B cell (primary cell): ENCODE measurements at regions of chr1 and their contacts with region 1.

Region 1: GRCh38 chr1:206563367-206564207 is 48.7 kb downstream of the EIF2D start:
- DNase-seq: no peak
- ATAC-seq: no peak
- H3K4me3 ChIP-seq: peak overlapping the region in 3 of 5 experiments; percentile 6 to 15 (median 11)
- H3K4me3 Mint-ChIP-seq: peak overlapping the region; percentile 78
- H3K27ac ChIP-seq: peak overlapping the region; percentile 60 to 77
- H3K27ac Mint-ChIP-seq: peak overlapping the region; percentile 92
- H3K4me1 ChIP-seq: peaks cover 86 to 98% of the 10 kb centered on the region in 2 donors
- H3K4me1 Mint-ChIP-seq: peaks cover 94% of the 10 kb centered on the region
- H3K27me3 ChIP-seq: no peaks in the 10 kb centered on the region
- H3K27me3 Mint-ChIP-seq: no peaks in the 10 kb centered on the region
- CTCF ChIP-seq: no peak

Region 2: DNA sequence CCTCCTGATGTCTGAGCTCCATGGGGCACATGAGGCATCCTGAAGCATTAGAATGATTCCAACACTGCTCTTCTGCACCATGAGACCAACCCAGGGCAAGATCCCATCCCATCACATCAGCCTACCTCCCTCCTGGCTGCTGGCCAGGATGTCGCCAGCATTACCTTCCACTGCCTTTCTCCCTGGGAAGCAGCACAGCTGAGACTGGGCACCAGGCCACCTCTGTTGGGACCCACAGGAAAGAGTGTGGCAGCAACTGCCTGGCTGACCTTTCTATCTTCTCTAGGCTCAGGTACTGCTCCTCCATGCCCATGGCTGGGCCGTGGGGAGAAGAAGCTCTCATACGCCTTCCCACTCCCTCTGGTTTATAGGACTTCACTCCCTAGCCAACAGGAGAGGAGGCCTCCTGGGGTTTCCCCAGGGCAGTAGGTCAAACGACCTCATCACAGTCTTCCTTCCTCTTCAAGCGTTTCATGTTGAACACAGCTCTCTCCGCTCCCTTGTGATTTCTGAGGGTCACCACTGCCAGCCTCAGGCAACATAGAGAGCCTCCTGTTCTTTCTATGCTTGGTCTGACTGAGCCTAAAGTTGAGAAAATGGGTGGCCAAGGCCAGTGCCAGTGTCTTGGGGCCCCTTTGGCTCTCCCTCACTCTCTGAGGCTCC is 67.3 kb before region 1 on chr1:
- CTCF ChIA-PET with region 1: no interaction called
- POLR2A ChIA-PET with region 1: no interaction called
- intact Hi-C with region 1: loop called (anchors 5 kb)
- DNase-seq: peak; percentile 46
- ATAC-seq: peak; percentile 44
- H3K4me3 ChIP-seq: peak overlapping the region in 1 of 5 experiments; percentile 3
- H3K4me3 Mint-ChIP-seq: peak overlapping the region; percentile 68
- H3K27ac ChIP-seq: peak overlapping the region; percentile 28 to 67
- H3K27ac Mint-ChIP-seq: peak overlapping the region; percentile 83
- H3K4me1 ChIP-seq: peaks cover 32 to 37% of the 10 kb centered on the region in 2 donors
- H3K4me1 Mint-ChIP-seq: peaks cover 43% of the 10 kb centered on the region
- H3K27me3 ChIP-seq: no peaks in the 10 kb centered on the region
- H3K27me3 Mint-ChIP-seq: no peaks in the 10 kb centered on the region
- CTCF ChIP-seq: no peak

Region 3: GRCh38 chr1:206575165-206575893 is 11.7 kb after region 1 on chr1:
- CTCF ChIA-PET with region 1: interaction called, 1,018 read pairs
- POLR2A ChIA-PET with region 1: interaction called, 16 read pairs
- intact Hi-C with region 1: loop called (anchors 1 kb)
- DNase-seq: peak; percentile 84
- ATAC-seq: peak; percentile 38
- H3K4me3 ChIP-seq: peak overlapping the region; percentile 2 to 49 (median 26)
- H3K4me3 Mint-ChIP-seq: peak overlapping the region; percentile 86
- H3K27ac ChIP-seq: peak overlapping the region; percentile 86 to 96
- H3K27ac Mint-ChIP-seq: peak overlapping the region; percentile 98
- H3K4me1 ChIP-seq: peaks cover 80 to 89% of the 10 kb centered on the region in 2 donors
- H3K4me1 Mint-ChIP-seq: peaks cover 92% of the 10 kb centered on the region
- H3K27me3 ChIP-seq: no peaks in the 10 kb centered on the region
- H3K27me3 Mint-ChIP-seq: no peaks in the 10 kb centered on the region
- CTCF ChIP-seq: no peak